IMR-90 (cell line): ENCODE measurements at regions of chr6 and their contacts with region 1.

Region 1: DNA sequence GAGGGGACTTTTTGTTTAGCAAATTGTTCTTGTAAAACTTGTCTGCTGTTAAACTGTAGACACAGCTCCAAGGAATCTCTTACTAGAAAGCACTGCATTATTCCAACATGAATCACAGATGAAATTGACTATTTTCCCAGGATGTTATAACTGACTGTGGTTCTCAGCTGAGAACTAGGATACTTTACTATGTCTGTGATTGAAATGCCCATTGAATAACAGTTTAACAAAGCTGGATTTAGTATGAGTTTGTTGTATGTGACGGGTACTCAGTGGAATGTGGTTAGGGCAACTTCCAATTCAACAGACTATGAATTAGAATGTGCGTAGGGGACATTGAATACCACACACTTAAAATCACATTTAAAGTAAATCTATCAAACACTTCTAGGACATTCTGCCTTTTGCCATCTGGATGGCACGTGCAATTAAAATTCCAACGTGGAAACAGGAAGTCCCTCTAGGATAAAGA is 193.4 kb upstream of the PREP start:
- DNase-seq: peak; percentile 99
- ATAC-seq: peak; percentile 91
- H3K4me3 ChIP-seq: no peak overlapping the region
- H3K27ac ChIP-seq: no peak overlapping the region
- H3K4me1 ChIP-seq: peaks cover 22% of the 10 kb centered on the region
- H3K27me3 ChIP-seq: no peaks in the 10 kb centered on the region
- CTCF ChIP-seq: no peak
- POLR2A ChIP-seq: no peak
- RAD21 ChIP-seq: no peak; the same call in 1 of the 2 replicates

Region 2: GRCh38 chr6:105608711-105609374 is 12.5 kb after region 1 on chr6:
- CTCF ChIA-PET with region 1: no interaction called
- POLR2A ChIA-PET with region 1: interaction called, 17 read pairs
- dilution Hi-C with region 1: no loop called
- in situ Hi-C with region 1: no loop called
- intact Hi-C with region 1: loop called (anchors 1 kb)
- DNase-seq: peak; percentile 97
- ATAC-seq: peak; percentile 77
- H3K4me3 ChIP-seq: no peak overlapping the region
- H3K27ac ChIP-seq: peak overlapping the region; percentile 92
- H3K4me1 ChIP-seq: peaks cover 20% of the 10 kb centered on the region
- H3K27me3 ChIP-seq: no peaks in the 10 kb centered on the region
- CTCF ChIP-seq: no peak
- POLR2A ChIP-seq: peak; percentile 55; the same call in 1 of the 2 replicates
- RAD21 ChIP-seq: peak; percentile 2; the same call in 1 of the 2 replicates